ENCODE measurements at regions of chr5 and their contacts with region 1.

Region 1: DNA sequence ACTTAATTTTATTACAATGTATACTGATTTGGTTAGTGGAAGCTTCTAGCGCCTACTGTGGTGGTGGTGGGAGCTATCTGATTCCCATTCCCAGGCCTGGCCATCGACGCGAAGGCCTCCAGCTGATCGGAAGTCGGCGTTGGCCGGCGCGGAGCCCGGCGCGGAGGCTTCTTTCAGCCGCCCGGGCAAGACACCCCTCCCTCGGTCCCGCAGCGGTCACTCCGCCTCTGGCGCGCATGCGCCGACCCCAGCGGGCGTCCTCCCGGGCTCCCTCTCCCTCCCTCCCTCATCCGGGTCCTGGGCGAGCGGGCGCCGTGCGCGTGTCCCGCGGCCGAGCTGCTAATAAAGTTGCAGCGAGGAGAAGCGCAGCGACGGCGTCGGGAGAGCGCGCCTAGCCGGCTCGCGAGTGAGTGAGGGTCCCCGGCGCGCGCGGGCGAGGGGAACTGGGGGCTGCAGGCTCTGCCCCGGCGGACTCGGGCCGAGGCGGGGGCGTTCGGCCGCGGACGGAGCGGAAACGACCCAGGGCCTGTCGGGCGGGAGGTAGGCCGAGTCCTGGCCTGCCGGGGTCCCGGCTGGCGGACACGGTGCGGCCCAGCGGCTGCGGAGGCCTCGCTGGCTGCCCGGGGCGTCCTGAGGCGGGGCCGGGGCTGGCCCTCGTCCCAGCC is at the start of gene SMAD5:
- DNase-seq: peak; percentile 96 to 98
- ATAC-seq: peak; percentile 98 to 100 (median 100)
- H3K4me3 ChIP-seq: peak within 1 kb of the TSS; percentile 65 to 97 (median 88)
- H3K27ac ChIP-seq: peak within 1 kb of the TSS; percentile 92 to 100 (median 97)
- H3K4me1 ChIP-seq: peaks cover 12 to 71% (median 42%) of the 10 kb centered on the region in 9 donors
- H3K27me3 ChIP-seq: no peaks in the 10 kb centered on the region
- CTCF ChIP-seq: peak in 1 of 9 donors; percentile 13
- total RNA-seq, gene SMAD5: 33.3 to 53.8 (median 39.8) TPM

Region 2: DNA sequence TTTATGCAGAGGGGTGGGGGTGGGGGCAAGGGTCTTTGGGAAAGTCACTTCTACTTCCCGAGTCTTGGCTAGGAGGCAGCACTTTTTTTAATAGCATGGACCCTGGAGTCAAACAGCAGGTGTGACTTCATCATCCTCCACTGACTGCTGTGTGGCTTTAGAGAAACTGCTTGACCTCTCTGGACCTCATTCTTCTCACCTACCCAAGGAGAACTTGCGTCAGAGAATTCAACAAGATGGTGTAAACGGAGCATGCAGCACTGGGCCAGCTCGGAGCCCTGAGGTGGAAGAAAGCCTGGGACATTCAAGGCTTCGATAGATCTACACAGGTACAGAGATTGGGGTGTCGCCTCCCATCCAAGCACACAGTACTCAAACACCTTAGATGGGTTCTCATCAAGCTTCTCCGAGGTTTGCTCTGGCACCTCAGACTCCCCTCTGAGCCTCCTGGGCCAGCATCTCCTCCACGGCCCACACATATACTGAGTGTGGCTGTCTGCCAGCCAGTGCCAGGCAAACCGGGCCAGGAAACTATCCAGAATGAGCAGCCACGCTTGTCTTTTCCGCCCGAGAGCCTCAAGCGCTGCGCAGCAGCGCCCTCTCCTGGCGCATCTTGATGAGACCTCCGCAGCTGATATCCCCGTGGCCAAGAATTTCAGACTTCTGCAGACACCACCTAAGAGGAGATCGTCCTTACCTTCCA is 302.9 kb before region 1 on chr5:
- intact Hi-C with region 1: no loop called
- DNase-seq: peak; percentile 36 to 66
- ATAC-seq: peak; percentile 22 to 66 (median 54)
- H3K4me3 ChIP-seq: no peak overlapping the region
- H3K27ac ChIP-seq: no peak overlapping the region
- H3K4me1 ChIP-seq: peaks cover 0 to 9% (median 7%) of the 10 kb centered on the region in 9 donors
- H3K27me3 ChIP-seq: peaks cover 5 to 49% (median 40%) of the 10 kb centered on the region in 7 donors
- CTCF ChIP-seq: peak; percentile 58 to 82 (median 77)

Region 3: DNA sequence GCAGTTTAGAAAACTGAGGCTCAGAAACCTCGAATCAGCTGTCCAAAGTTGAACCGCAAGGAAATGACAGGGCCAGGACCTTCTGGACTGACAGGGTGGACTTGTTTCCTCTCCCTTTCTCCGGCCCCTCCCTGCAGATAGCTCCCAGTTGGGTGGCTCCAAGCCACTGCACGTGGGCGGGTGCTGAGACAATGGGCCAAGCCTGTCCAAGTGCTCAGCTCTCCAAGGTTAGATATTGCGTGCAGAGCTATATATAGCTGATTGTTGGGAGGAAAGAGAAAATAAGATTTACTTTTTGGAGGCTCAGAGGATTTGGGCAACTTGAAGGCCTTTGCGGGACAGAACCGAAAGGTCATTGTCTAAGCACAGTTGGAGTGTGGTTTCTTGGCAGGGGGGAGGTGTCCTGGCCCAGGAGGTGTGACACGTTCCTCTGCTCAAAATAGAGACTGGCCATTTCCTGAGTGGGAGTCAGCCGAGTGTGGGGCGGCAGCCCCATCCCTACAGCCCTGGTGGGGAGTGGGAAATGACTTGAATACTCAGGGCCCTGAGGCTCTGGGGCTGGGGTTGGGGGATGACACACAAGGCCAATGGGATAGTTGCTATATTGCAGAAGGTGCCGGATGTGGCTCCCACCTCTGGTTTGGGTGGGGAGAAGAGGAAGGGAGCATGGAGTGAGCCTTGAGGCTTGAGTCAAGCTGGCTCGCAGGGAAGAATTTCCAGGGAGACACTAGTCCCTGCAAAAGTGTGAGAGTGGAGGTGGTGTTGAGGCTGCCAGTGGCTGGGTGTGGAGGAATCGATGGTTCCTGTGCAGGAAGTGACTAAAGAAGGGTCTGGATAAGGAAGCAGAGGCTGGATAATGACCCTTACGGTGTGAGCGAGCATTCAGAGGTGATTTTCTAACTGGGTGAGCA is 44.5 kb before region 1 on chr5:
- intact Hi-C with region 1: loop called in 7 of 10 experiments (anchors 2 to 5 kb)
- DNase-seq: peak; percentile 85 to 93
- ATAC-seq: peak; percentile 97 to 99 (median 98)
- H3K4me3 ChIP-seq: peak overlapping the region in 2 of 10 donors; percentile 18
- H3K27ac ChIP-seq: peak overlapping the region; percentile 81 to 95 (median 86)
- H3K4me1 ChIP-seq: peaks cover 7 to 63% (median 38%) of the 10 kb centered on the region in 9 donors
- H3K27me3 ChIP-seq: no peaks in the 10 kb centered on the region
- CTCF ChIP-seq: no peak

Region 4: DNA sequence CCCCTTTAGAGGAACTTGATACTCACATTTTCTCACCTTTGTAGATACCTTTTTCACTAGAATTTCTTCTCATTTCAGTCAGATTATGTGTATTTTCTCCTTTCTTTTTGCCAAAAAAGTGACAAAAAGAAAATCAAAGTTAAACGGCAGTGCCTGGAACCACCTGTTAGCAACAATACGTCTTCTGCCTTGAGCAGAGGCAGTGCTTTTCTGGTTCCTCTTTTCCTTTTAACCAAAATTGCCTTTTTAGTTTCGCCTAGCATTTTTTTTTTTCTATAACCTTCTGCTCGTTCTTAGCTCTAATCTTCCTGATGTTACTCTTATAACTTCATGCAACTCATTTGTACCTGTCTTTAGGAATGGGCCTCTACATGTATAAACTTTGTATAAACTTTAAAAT is 34.2 kb after region 1 on chr5:
- intact Hi-C with region 1: loop called in 1 of 10 experiments (anchors 5 kb)
- DNase-seq: no peak
- ATAC-seq: no peak
- H3K4me3 ChIP-seq: no peak overlapping the region
- H3K27ac ChIP-seq: no peak overlapping the region
- H3K4me1 ChIP-seq: peaks cover 0 to 10% (median 0%) of the 10 kb centered on the region in 9 donors
- H3K27me3 ChIP-seq: no peaks in the 10 kb centered on the region
- CTCF ChIP-seq: no peak

Region 5: GRCh38 chr5:136182618-136183017 is 49.9 kb after region 1 on chr5:
- intact Hi-C with region 1: no loop called
- DNase-seq: no peak
- ATAC-seq: no peak
- H3K4me3 ChIP-seq: no peak overlapping the region
- H3K27ac ChIP-seq: no peak overlapping the region
- H3K4me1 ChIP-seq: no peaks in the 10 kb centered on the region
- H3K27me3 ChIP-seq: no peaks in the 10 kb centered on the region
- CTCF ChIP-seq: no peak

Region 6: DNA sequence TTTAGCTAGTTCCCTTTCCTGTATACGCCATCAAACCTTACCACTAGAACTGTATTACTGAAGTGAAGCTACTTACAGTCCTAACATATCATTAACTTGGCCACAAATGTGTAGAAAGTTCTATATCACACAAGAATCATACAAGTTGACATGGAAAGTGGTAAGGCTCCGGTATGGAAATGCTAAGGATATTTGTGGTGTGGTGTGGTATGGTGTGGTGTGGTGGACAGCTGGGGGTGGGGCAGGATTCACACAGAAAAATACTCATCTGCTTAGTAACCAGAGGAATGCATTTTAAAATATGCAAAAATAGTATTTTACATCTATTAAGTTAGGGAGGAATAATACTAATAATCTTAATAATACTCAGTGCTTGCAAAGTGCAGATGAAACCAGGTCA is 163.2 kb after region 1 on chr5:
- intact Hi-C with region 1: no loop called
- DNase-seq: no peak
- ATAC-seq: no peak
- H3K4me3 ChIP-seq: no peak overlapping the region
- H3K27ac ChIP-seq: no peak overlapping the region
- H3K4me1 ChIP-seq: no peaks in the 10 kb centered on the region
- H3K27me3 ChIP-seq: peaks cover 0 to 5% (median 0%) of the 10 kb centered on the region in 7 donors
- CTCF ChIP-seq: no peak